HepG2 (cell line): ENCODE measurements at regions of chr7 and their contacts with region 1.

Region 1: DNA sequence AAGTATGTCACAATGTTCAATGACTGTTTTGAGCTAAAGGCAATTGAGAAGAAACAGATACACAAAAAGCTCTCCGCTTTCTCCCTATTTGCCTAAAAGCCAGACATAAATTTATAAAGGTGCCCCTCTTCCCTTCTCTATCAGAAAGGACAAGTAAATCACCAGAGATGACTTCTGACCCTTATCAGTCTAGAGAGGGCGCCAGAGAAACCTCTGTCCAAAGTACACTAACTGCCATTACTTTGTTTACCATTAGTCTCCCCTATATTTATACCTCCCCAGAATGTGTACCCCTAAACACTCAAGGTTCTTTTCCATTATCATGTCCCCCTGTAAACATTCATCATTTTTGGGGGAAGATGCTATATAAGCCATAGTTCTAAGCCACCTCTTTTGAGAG is 49.3 kb downstream of the TPK1 start:
- DNase-seq: no peak
- ATAC-seq: no peak
- H3K4me3 ChIP-seq: no peak overlapping the region
- H3K27ac ChIP-seq: no peak overlapping the region
- H3K4me1 ChIP-seq: no peaks in the 10 kb centered on the region
- H3K27me3 ChIP-seq: no peaks in the 10 kb centered on the region
- CTCF ChIP-seq: no peak
- EP300 ChIP-seq: no peak
- POLR2A ChIP-seq: no peak
- RAD21 ChIP-seq: no peak

Region 2: DNA sequence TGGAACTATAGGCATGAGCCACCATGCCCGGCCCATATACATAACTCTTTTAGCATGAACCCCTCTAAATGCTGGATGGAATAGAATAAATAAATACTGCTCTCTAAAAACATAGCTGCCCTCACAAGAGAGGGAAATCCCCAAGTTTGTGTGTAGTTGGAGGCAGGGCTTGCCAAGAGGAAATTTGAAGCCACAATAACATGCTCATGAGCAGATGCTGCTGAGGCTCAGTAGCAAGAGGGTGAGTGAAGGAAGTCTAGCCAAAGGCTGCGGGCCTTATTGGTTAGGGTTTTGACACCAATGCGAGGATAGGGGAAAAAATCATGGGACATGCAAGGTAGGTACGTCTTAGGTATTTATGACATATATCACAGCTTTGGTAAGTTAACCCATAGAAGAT is 32.0 kb after region 1 on chr7:
- CTCF ChIA-PET with region 1: no interaction called
- POLR2A ChIA-PET with region 1: no interaction called
- in situ Hi-C with region 1: no loop called
- intact Hi-C with region 1: no loop called
- DNase-seq: no peak
- ATAC-seq: no peak
- H3K4me3 ChIP-seq: no peak overlapping the region
- H3K27ac ChIP-seq: no peak overlapping the region
- H3K4me1 ChIP-seq: no peaks in the 10 kb centered on the region
- H3K27me3 ChIP-seq: no peaks in the 10 kb centered on the region
- CTCF ChIP-seq: no peak
- EP300 ChIP-seq: no peak
- POLR2A ChIP-seq: no peak
- RAD21 ChIP-seq: no peak

Region 3: DNA sequence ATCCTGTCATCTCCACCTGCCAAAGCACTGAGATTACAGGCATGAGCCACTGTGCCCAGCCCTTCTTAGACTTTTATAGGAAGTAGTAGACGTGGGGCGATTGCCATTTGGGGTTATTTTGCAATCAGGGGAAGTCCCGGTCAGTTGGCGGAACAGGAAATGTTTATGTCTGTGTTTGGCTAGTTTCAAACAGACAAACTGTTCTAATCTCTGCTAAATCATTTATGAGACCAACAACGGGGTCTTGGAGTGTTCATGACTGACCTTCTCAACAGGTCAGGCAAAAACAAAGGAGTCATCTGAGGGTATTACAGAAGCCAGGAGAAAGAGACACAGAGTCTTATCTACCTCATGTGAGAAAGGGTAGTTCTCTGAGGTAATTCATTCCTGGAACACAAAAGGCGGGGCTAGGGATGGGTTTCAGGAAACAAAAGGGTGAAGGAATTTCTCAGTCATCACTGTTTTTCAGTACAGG is 55.9 kb after region 1 on chr7:
- CTCF ChIA-PET with region 1: no interaction called
- POLR2A ChIA-PET with region 1: no interaction called
- in situ Hi-C with region 1: no loop called
- intact Hi-C with region 1: loop called (anchors 2 kb)
- DNase-seq: no peak
- ATAC-seq: no peak
- H3K4me3 ChIP-seq: no peak overlapping the region
- H3K27ac ChIP-seq: no peak overlapping the region
- H3K4me1 ChIP-seq: no peaks in the 10 kb centered on the region
- H3K27me3 ChIP-seq: no peaks in the 10 kb centered on the region
- CTCF ChIP-seq: no peak
- EP300 ChIP-seq: no peak
- POLR2A ChIP-seq: no peak
- RAD21 ChIP-seq: no peak